HepG2 (cell line): ENCODE measurements at regions of chr13 and their contacts with region 1.

Region 1: DNA sequence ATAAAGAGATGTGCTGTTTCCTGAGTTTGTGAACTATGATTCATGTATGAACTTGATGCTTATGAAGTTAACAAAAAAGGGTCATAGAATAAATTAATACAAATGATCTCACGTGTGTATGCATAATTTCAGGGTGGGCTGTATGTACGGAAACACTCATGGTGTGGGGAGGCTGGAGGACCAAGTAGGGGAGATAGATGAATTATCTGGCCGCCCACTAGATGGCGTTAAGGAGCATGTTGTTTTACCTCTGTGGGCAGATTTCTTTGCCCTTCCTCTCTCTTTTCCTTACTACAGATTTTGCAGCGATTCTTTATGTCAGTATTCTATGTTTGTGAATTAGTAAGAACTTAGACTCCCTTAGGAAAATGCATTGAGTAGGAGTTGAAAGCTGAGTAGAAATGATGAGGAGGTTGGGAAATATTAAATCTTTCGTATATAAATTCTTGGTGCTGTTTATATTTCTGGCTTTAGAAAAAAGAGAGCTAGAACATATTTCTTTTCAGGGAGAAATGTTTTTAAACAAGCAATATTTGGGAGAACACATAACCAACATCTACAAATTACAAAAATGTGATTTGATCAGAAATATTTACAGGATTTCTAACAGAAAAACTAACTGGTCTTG is 47.4 kb upstream of the TMTC4 start:
- DNase-seq: peak; percentile 50
- ATAC-seq: peak; percentile 87
- H3K4me3 ChIP-seq: no peak overlapping the region
- H3K27ac ChIP-seq: no peak overlapping the region
- H3K4me1 ChIP-seq: peaks cover 20% of the 10 kb centered on the region
- H3K27me3 ChIP-seq: no peaks in the 10 kb centered on the region
- CTCF ChIP-seq: peak; percentile 80
- EP300 ChIP-seq: no peak
- POLR2A ChIP-seq: no peak
- RAD21 ChIP-seq: peak; percentile 70

Region 2: GRCh38 chr13:100707818-100708740 is 13.9 kb before region 1 on chr13:
- CTCF ChIA-PET with region 1: no interaction called
- POLR2A ChIA-PET with region 1: no interaction called
- in situ Hi-C with region 1: no loop called
- intact Hi-C with region 1: no loop called
- DNase-seq: no peak
- ATAC-seq: no peak
- H3K4me3 ChIP-seq: no peak overlapping the region
- H3K27ac ChIP-seq: no peak overlapping the region
- H3K4me1 ChIP-seq: no peaks in the 10 kb centered on the region
- H3K27me3 ChIP-seq: peaks cover under 1 to 12% of the 10 kb centered on the region in 2 experiments; a peak in 2 of 5 replicates
- CTCF ChIP-seq: no peak
- EP300 ChIP-seq: no peak
- POLR2A ChIP-seq: no peak
- RAD21 ChIP-seq: no peak

Region 3: DNA sequence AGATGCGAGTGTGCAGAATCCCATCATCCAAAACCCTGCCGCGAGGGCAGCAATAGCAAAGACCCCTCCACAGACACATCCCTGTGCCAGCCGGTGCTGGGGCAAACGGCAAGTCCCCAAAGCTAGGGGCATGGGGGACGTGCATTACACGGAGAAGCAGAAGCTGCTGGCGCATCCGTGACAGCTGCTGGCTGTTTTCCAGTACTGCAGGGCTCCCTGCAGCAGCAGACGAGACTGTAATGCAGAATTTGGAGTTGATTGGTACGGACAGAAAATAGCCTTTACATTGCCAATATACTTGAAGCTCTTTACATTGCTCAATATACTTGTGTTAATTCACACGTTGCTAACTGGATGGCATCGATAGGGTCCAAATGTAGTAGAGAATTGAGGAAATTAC is 29.8 kb after region 1 on chr13:
- CTCF ChIA-PET with region 1: interaction called, 8 read pairs
- POLR2A ChIA-PET with region 1: no interaction called
- in situ Hi-C with region 1: no loop called
- intact Hi-C with region 1: loop called (anchors 1 kb)
- DNase-seq: peak; percentile 6
- ATAC-seq: peak; percentile 89
- H3K4me3 ChIP-seq: no peak overlapping the region
- H3K27ac ChIP-seq: no peak overlapping the region
- H3K4me1 ChIP-seq: peaks cover 21% of the 10 kb centered on the region; the same call in 1 of the 2 replicates
- H3K27me3 ChIP-seq: peaks cover 1 to 23% of the 10 kb centered on the region in 2 experiments; a peak in 2 of 5 replicates
- CTCF ChIP-seq: peak; percentile 65
- EP300 ChIP-seq: no peak
- POLR2A ChIP-seq: no peak
- RAD21 ChIP-seq: peak; percentile 62

Region 4: GRCh38 chr13:100828226-100828625 is 106.2 kb after region 1 on chr13:
- CTCF ChIA-PET with region 1: interaction called, 7 read pairs
- POLR2A ChIA-PET with region 1: no interaction called
- in situ Hi-C with region 1: loop called (anchors 5 kb)
- intact Hi-C with region 1: loop called (anchors 1 kb)
- DNase-seq: peak; percentile 42
- ATAC-seq: peak; percentile 98
- H3K4me3 ChIP-seq: no peak overlapping the region
- H3K27ac ChIP-seq: no peak overlapping the region
- H3K4me1 ChIP-seq: peaks cover 6% of the 10 kb centered on the region
- H3K27me3 ChIP-seq: no peaks in the 10 kb centered on the region; a peak in 1 of 5 replicates
- CTCF ChIP-seq: peak; percentile 71
- EP300 ChIP-seq: no peak
- POLR2A ChIP-seq: no peak
- RAD21 ChIP-seq: peak; percentile 49; the same call in 1 of the 2 replicates

Region 5: DNA sequence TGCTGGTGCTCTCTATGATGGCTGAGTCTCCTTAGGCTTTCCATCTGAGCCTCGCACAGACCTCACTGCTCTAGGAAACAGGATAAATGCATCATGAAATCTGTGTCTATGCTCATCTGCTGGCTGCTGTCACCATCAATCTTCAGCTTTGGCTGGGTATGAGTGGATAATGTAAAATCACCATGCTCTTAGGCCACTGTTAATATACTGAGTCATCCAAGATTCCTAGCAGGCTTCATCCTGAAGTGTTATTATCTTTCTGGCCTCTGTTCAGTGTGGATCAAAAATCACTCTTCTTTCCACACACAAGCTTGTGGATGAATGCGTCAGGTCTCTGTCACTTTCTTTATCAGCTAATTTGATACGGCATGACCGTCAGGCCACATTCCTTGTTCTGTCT is 376.9 kb after region 1 on chr13:
- CTCF ChIA-PET with region 1: interaction called, 3 read pairs
- POLR2A ChIA-PET with region 1: no interaction called
- in situ Hi-C with region 1: no loop called
- intact Hi-C with region 1: loop called (anchors 2 kb)
- DNase-seq: no peak
- ATAC-seq: no peak
- H3K4me3 ChIP-seq: no peak overlapping the region
- H3K27ac ChIP-seq: no peak overlapping the region
- H3K4me1 ChIP-seq: 0 out of 2 replicates have a peak, but pooled peaks cover 9% of the 10 kb centered on the region
- H3K27me3 ChIP-seq: peaks cover 1 to 7% of the 10 kb centered on the region in 2 experiments; a peak in 2 of 5 replicates
- CTCF ChIP-seq: no peak
- EP300 ChIP-seq: no peak
- POLR2A ChIP-seq: no peak
- RAD21 ChIP-seq: no peak